ENCODE measurements at regions of chr12 and their contacts with region 1.

Region 1: GRCh38 chr12:110100315-110100970 is 23.7 kb upstream of the IFT81 start:
- DNase-seq: peak; percentile 44 to 80
- H3K4me3 ChIP-seq: no peak overlapping the region
- H3K27ac ChIP-seq: no peak overlapping the region
- H3K4me1 ChIP-seq: no peaks in the 10 kb centered on the region
- H3K27me3 ChIP-seq: no peaks in the 10 kb centered on the region
- CTCF ChIP-seq: peak; percentile 31 to 97 (median 81)
- EP300 ChIP-seq: no peak
- POLR2A ChIP-seq: no peak
- RAD21 ChIP-seq: peak; percentile 92 to 93

Region 2: DNA sequence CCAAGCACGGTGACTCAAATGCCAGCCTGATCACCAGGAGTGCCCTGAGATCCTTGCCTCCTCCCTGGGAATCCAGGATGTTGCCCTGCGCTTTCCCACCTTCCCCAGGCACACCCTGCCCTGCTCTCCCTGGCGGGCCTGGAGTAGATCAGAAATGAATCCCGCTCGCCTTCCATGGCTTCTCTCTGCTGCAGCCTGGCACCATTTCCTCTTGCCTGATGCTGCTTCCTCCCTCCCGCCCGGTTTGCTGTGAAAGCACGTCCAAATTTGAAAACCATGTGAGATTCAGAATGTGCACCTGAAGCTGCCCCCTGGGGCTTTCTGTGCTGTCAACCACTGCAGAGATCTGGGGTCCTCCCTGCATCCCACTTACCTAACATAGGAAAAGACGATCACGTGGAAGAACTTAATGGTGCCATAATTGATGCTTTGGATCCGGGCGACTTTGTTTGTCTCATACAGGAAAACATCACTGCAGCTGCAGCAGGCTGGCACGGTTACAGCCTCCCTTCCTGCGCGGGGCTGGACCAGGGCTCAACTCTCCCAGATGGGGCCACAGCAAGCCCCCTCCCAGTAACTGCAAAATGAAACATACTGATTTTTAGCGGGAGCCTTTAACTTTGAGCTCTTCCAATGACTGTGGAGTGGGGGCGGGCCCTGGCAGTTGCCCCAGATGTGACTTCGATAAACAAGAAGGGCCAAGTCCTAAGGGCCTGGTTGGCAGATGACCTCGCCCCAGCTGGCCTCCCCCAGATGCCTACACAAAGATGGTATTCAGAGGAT is 27.2 kb before region 1 on chr12:
- CTCF ChIA-PET with region 1: interaction called, 11 read pairs
- POLR2A ChIA-PET with region 1: no interaction called
- DNase-seq: peak in 1 of 2 experiments; percentile 48
- H3K4me3 ChIP-seq: no peak overlapping the region
- H3K27ac ChIP-seq: no peak overlapping the region
- H3K4me1 ChIP-seq: no peaks in the 10 kb centered on the region; a peak in 1 of 7 replicates
- H3K27me3 ChIP-seq: no peaks in the 10 kb centered on the region
- CTCF ChIP-seq: no peak
- EP300 ChIP-seq: no peak
- POLR2A ChIP-seq: no peak
- RAD21 ChIP-seq: no peak

Region 3: GRCh38 chr12:110088936-110089335 is 11.5 kb before region 1 on chr12:
- CTCF ChIA-PET with region 1: interaction called, 24 read pairs
- POLR2A ChIA-PET with region 1: no interaction called
- DNase-seq: no peak
- H3K4me3 ChIP-seq: no peak overlapping the region
- H3K27ac ChIP-seq: no peak overlapping the region
- H3K4me1 ChIP-seq: no peaks in the 10 kb centered on the region
- H3K27me3 ChIP-seq: no peaks in the 10 kb centered on the region
- CTCF ChIP-seq: no peak
- EP300 ChIP-seq: no peak
- POLR2A ChIP-seq: no peak
- RAD21 ChIP-seq: no peak

Region 4: DNA sequence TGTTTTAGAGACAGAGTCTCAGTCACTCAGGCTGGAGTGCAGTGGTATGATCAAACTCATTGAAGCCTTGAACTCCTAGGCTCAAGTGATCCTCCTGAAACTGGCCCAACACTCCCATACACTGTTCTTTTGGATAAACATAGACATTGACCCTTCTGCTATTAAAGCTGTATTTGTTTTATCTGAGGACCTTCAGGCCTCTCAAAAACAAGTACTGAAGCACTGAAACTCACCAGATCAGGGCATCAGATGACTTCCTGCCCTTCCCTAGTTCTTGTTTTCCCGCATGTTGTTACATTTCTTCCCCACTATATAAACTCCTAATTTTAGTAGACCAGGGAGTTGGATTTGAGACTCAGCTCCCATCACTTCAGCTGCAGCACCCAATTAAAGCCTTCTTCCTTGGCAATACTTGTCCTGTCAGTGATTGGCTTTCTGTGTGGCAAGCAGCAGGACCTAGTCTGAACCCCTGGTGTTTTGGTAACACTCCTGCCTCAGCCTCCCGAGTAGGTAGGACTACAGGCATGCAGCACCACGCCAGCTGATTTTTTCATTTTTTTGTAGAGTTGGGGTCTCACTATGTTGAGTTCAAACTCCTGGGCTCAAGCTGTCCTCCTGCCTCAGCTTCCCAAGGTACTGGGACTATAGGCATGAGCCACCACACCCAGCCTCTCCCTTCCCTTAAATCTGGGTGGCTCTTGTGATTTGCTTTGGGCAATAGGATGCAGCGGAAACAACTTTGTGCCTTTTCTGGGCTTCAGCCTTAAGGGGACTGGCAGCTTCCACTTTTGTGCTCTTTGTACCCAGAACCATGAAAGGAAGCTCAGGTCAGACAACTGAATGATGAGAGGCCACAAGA is 11.3 kb after region 1 on chr12:
- CTCF ChIA-PET with region 1: interaction called, 28 read pairs
- POLR2A ChIA-PET with region 1: interaction called, 7 read pairs
- DNase-seq: no peak
- H3K4me3 ChIP-seq: no peak overlapping the region
- H3K27ac ChIP-seq: no peak overlapping the region
- H3K4me1 ChIP-seq: peaks cover 0 to 4% (median under 1%) of the 10 kb centered on the region in 4 experiments; a peak in 2 of 7 replicates
- H3K27me3 ChIP-seq: no peaks in the 10 kb centered on the region
- CTCF ChIP-seq: no peak
- EP300 ChIP-seq: no peak
- POLR2A ChIP-seq: no peak
- RAD21 ChIP-seq: no peak

Region 5: DNA sequence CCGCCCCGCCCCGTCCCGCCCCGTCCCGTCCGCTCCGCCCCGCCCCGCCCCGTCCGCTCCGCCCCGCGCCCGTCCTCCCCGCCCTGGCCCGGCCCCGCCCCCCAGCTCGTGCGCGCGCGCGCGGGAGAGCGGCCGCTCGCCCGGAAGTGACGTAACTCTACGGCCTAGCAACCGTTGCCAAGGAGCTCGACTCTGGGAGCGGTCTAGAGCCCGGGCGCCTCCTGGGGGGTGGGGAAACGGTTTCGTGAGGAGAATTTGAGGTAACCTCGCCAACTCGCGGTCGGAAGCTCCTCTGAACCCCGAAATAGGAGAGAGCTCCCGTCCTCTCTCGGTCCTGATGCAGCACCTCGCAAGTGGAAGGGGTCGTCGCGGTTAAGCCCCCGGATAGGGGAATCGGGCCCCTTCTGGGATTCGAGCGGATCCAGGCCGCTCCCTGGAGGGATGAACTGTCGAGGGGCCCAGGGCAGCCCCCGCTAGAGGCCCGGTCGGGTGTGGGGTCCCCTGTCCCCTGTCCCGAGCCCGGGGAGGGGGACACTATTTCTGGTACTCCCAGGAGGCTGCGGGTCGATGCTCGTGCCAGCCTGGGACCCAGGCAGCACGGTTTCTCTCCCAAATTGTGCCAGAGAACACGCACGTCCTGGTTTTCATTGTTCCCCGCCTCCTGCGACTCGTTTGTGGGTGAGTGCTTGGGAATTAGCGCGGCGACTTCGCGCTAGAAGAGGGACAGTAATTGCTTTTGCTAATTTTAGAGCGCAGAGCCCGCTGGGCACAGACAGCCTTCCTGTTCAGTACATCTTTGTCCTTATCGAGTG is 23.9 kb after region 1 on chr12 and contains the start of gene IFT81:
- CTCF ChIA-PET with region 1: interaction called, 16 read pairs
- POLR2A ChIA-PET with region 1: interaction called, 3 read pairs
- DNase-seq: peak; percentile 58 to 99
- H3K4me3 ChIP-seq: peak within 1 kb of the TSS; percentile 90 to 98 (median 94)
- H3K27ac ChIP-seq: peak within 1 kb of the TSS; percentile 86
- H3K4me1 ChIP-seq: peaks cover 0 to 11% (median 10%) of the 10 kb centered on the region in 4 experiments; a peak in 6 of 7 replicates
- H3K27me3 ChIP-seq: peaks cover 0 to 2% (median 0%) of the 10 kb centered on the region in 4 experiments; a peak in 3 of 7 replicates
- CTCF ChIP-seq: no peak
- EP300 ChIP-seq: no peak
- POLR2A ChIP-seq: no peak; a peak in 2 of 3 replicates
- RAD21 ChIP-seq: no peak
- total RNA-seq, gene IFT81: 14.4 and 14.5 TPM in 2 replicates

Region 6: GRCh38 chr12:110330544-110330943 is 230.1 kb after region 1 on chr12:
- CTCF ChIA-PET with region 1: interaction called, 10 read pairs
- POLR2A ChIA-PET with region 1: no interaction called
- DNase-seq: no peak
- H3K4me3 ChIP-seq: no peak overlapping the region
- H3K27ac ChIP-seq: no peak overlapping the region
- H3K4me1 ChIP-seq: no peaks in the 10 kb centered on the region
- H3K27me3 ChIP-seq: no peaks in the 10 kb centered on the region
- CTCF ChIP-seq: no peak
- EP300 ChIP-seq: no peak
- POLR2A ChIP-seq: no peak
- RAD21 ChIP-seq: no peak